Activated CD4-positive, alpha-beta memory T cell treated with anti-CD3 and anti-CD28 coated beads for 36 hours (primary cell): ENCODE measurements at regions of chr1 and their contacts with region 1.

Region 1: GRCh38 chr1:27300341-27301051 is 21.5 kb upstream of the TMEM222 start:
- DNase-seq: peak; percentile 83
- H3K4me3 Mint-ChIP-seq: no peak overlapping the region
- H3K27ac Mint-ChIP-seq: no peak overlapping the region
- H3K4me1 Mint-ChIP-seq: no peaks in the 10 kb centered on the region
- H3K27me3 Mint-ChIP-seq: no peaks in the 10 kb centered on the region

Region 2: GRCh38 chr1:27284425-27285273 is 15.8 kb before region 1 on chr1:
- CTCF ChIA-PET with region 1: interaction called, 13 read pairs
- POLR2A ChIA-PET with region 1: no interaction called
- intact Hi-C with region 1: no loop called
- DNase-seq: peak; percentile 90
- H3K4me3 Mint-ChIP-seq: no peak overlapping the region
- H3K27ac Mint-ChIP-seq: no peak overlapping the region
- H3K4me1 Mint-ChIP-seq: no peaks in the 10 kb centered on the region
- H3K27me3 Mint-ChIP-seq: no peaks in the 10 kb centered on the region

Region 3: GRCh38 chr1:27321813-27322577 is 21.5 kb after region 1 on chr1 and contains the start of gene TMEM222:
- CTCF ChIA-PET with region 1: interaction called, 19 read pairs
- POLR2A ChIA-PET with region 1: no interaction called
- intact Hi-C with region 1: no loop called
- DNase-seq: peak; percentile 98
- H3K4me3 Mint-ChIP-seq: peak within 1 kb of the TSS; percentile 96
- H3K27ac Mint-ChIP-seq: peak within 1 kb of the TSS; percentile 82
- H3K4me1 Mint-ChIP-seq: peaks cover 41% of the 10 kb centered on the region
- H3K27me3 Mint-ChIP-seq: no peaks in the 10 kb centered on the region
- total RNA-seq, gene TMEM222: 22.8 to 24.6 TPM

Region 4: DNA sequence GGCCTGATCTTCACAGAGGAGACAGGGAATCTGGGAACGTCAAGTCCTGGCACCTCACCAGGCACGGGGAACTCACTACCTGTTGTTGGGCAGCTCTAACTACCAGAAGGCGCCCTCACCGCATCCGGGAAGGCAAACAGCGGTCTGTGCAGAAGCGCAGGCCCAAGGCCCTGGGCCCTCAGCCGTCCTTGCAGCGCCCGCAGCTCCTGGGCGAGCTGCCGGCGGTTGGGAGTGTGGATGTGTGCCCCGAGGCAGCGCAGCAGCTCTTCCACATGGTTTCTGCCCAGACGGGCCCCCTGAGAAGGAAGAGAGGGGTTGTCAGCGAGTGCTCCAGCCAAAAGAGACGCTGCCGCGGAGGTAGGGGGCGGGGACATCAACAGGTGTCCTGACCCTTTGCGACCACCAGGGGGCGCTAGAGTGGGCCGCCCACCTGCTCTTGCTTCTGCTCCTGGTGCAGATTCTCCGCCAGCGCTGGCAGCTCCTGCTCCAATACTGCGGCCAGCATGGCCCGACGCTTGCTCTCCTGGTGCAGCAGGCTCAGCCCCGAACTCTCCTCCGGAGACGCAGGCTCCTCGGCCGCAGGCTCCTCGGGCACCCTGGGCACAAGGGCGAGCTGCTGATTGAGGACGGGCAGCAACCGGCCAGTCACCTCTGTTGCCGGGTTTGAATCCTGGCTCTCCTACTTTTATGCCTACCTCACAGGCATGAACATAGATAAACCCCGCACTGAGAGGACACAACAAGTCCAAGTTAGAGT is 57.0 kb after region 1 on chr1:
- CTCF ChIA-PET with region 1: interaction called, 31 read pairs
- POLR2A ChIA-PET with region 1: no interaction called
- intact Hi-C with region 1: no loop called
- DNase-seq: peak; percentile 89
- H3K4me3 Mint-ChIP-seq: peak overlapping the region; percentile 68
- H3K27ac Mint-ChIP-seq: peak overlapping the region; percentile 81
- H3K4me1 Mint-ChIP-seq: peaks cover 43% of the 10 kb centered on the region
- H3K27me3 Mint-ChIP-seq: no peaks in the 10 kb centered on the region

Region 5: GRCh38 chr1:27392096-27392777 is 91.7 kb after region 1 on chr1 and contains the start of gene GPR3:
- CTCF ChIA-PET with region 1: interaction called, 257 read pairs
- POLR2A ChIA-PET with region 1: interaction called, 4 read pairs
- intact Hi-C with region 1: loop called (anchors 1 kb)
- DNase-seq: peak; percentile 96
- H3K4me3 Mint-ChIP-seq: peak within 1 kb of the TSS; percentile 78
- H3K27ac Mint-ChIP-seq: peak within 1 kb of the TSS; percentile 63
- H3K4me1 Mint-ChIP-seq: peaks cover 13% of the 10 kb centered on the region
- H3K27me3 Mint-ChIP-seq: no peaks in the 10 kb centered on the region
- total RNA-seq, gene GPR3: 1.3 to 1.5 TPM